Dorsolateral prefrontal cortex (tissue), 120 donors: ENCODE measurements at regions of chr1 and their contacts with region 1.

Region 1: DNA sequence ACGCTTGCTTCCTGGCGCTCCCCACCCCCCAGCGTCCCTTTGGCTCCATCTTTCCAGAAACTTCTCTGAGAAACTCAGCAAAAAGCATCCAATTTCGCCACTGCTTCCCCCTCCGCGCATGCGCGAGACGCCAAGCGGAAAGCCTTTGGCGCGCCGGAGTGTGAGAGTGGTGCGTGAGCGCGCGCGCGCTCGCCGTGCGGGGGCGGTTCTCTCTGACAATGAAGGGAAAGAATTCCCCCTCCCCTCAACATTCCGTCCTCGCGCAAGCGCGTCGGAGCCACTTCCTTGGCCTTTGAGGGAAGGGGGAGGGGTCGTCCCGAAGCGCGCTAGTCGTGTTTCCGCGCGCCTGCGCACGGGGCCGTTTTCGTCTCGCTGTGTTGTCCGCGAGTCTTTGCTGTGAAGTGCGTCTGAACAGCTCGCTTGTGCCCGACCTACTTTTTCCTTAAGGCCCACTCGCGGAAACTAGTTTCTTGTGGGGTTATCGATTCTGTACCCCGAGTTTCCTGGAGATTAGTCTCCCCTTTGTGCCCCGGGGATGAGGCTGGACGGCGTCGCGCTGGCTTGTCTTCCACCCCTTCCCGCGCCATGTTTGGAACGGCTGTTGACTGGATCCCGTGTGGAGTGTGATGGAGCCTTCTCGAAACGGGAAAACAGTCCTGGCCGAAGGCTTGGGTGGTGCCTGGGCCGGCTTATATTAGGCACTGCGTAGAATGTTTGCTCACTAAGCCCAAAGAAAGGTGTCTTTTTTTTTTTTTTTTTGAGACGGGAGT is 11.6 kb upstream of the SPEN start:
- DNase-seq: peak; percentile 97 to 99 (median 98)
- H3K4me3 ChIP-seq: peak overlapping the region; percentile 64 to 95 (median 83)
- H3K27ac ChIP-seq: peak overlapping the region; percentile 97 to 100 (median 100)
- H3K27me3 ChIP-seq: no peaks in the 10 kb centered on the region
- CTCF ChIP-seq: peak in 18 of 56 donors; percentile 5 to 46 (median 20)

Region 2: DNA sequence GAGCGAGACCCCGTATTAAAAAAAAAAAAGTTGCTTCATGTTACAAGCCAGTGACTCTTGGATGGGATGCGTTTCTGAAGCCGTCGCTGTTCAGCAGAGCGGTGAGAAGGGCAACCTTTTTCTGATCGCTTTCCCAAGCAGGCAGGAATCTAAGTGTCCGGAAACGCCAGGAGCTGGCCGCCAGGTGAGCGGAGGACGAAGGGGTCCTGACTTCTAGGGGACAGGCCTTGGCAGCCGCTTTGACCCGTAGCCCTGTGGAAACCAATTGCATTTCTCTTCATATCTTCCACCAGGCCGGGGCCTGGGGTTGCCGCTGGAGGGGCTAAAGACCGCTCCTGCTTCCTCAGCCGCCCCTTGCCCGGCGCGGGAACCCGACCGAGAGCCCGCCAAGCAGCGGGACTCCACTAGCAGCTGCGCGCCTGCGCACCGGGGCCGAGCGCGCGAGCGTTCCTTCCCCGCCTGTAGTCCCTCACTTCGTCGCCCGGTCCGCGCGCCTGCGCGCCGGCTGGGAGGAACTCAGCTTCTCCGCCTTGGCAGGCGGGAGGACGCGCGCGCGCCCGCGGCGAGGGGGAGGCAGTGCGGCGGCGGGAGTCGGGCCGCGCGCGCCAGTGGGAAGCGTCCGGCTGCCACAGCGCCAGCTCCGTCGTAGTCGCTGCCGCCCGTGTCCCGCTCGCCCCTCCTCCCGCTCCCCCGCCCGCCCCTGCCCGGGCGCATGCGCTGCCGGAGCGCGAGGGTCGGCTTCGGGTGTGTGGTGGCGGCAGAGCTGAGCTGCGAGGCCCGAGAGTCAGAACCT is 11.4 kb after region 1 on chr1 and contains the start of gene SPEN:
- intact Hi-C with region 1: loop called (anchors 1 kb)
- DNase-seq: peak; percentile 91 to 98 (median 96)
- H3K4me3 ChIP-seq: peak within 1 kb of the TSS; percentile 63 to 99 (median 91)
- H3K27ac ChIP-seq: peak within 1 kb of the TSS; percentile 88 to 99 (median 98)
- H3K27me3 ChIP-seq: no peaks in the 10 kb centered on the region
- CTCF ChIP-seq: peak in 22 of 56 donors; percentile 6 to 43 (median 22)
- total RNA-seq, gene SPEN: 64.4 to 134 (median 84.8) TPM

Region 3: DNA sequence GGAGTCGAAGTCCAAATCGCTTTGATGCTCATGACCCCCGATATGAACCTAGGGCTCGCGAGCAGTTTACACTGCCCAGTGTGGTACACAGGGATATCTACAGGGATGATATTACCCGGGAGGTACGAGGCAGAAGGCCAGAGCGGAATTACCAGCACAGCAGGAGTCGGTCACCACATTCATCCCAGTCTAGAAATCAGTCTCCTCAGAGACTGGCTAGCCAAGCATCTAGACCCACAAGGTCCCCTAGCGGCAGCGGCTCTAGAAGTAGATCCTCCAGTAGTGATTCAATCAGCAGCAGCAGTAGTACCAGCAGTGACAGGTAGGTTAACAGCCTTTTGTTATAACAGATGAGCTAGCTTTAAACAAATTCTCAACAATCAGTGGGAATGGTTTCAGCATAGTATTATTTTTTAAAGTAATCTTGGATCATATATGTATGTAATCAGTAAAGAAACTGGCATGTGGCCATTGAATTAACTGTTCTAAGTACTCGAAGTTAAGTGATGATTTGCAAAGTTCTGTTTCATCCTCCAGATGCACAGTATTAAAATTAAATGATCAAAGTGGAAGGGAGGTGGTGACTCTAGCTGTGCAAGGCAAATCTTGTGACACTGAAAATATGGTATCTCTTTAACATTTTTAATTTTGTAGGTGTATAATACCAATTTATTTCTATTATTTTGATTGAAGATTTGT is 40.6 kb after region 1 on chr1:
- intact Hi-C with region 1: no loop called
- DNase-seq: peak in 1 of 10 donors; percentile 49
- H3K4me3 ChIP-seq: no peak overlapping the region
- H3K27ac ChIP-seq: peak overlapping the region in 4 of 59 donors; percentile 4 to 55 (median 32)
- H3K27me3 ChIP-seq: no peaks in the 10 kb centered on the region
- CTCF ChIP-seq: peak in 19 of 56 donors; percentile 8 to 37 (median 17)